ENCODE measurements at regions of chr2 and their contacts with region 1.

Region 1: GRCh38 chr2:30165050-30165520 is 18.3 kb downstream of the YPEL5 start:
- H3K4me3 ChIP-seq: no peak overlapping the region
- H3K27ac ChIP-seq: no peak overlapping the region
- H3K4me1 ChIP-seq: no peaks in the 10 kb centered on the region
- CTCF ChIP-seq: peak; percentile 90

Region 2: GRCh38 chr2:29802986-29803385 is 362.1 kb before region 1 on chr2:
- CTCF ChIA-PET with region 1: no interaction called
- POLR2A ChIA-PET with region 1: no interaction called
- H3K4me3 ChIP-seq: no peak overlapping the region
- H3K27ac ChIP-seq: no peak overlapping the region
- H3K4me1 ChIP-seq: no peaks in the 10 kb centered on the region
- CTCF ChIP-seq: no peak

Region 3: GRCh38 chr2:30146438-30147147 is 18.5 kb before region 1 on chr2 and contains the start of gene YPEL5:
- CTCF ChIA-PET with region 1: interaction called, 71 read pairs
- POLR2A ChIA-PET with region 1: interaction called, 10 read pairs
- H3K4me3 ChIP-seq: peak within 1 kb of the TSS; percentile 80
- H3K27ac ChIP-seq: peak within 1 kb of the TSS; percentile 92
- H3K4me1 ChIP-seq: peaks cover 22% of the 10 kb centered on the region
- CTCF ChIP-seq: no peak

Region 4: GRCh38 chr2:30185186-30185585 is 20.1 kb after region 1 on chr2:
- CTCF ChIA-PET with region 1: interaction called, 31 read pairs
- POLR2A ChIA-PET with region 1: no interaction called
- H3K4me3 ChIP-seq: no peak overlapping the region
- H3K27ac ChIP-seq: no peak overlapping the region
- H3K4me1 ChIP-seq: no peaks in the 10 kb centered on the region
- CTCF ChIP-seq: no peak

Region 5: DNA sequence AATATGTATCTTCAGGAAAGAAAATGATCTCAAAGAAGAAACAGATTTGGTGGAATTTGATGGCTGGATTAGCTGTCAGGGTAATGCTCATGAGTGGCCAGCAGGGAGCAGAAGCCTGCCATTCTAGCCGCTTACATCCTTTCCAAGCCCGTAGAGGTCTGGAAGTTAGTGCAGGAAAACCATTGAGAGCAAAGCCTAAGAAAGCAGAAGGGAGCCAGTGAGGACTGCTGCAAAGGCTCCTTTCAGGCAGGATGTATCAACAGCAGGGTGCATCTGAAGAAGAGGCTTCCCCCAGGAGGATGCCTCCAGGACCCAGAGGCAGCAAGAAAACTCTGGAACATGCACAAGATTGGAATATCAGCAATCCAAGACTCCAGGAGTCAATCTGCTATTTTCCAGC is 43.4 kb after region 1 on chr2:
- CTCF ChIA-PET with region 1: interaction called, 55 read pairs
- POLR2A ChIA-PET with region 1: no interaction called
- H3K4me3 ChIP-seq: no peak overlapping the region
- H3K27ac ChIP-seq: no peak overlapping the region
- H3K4me1 ChIP-seq: no peaks in the 10 kb centered on the region
- CTCF ChIP-seq: peak; percentile 55; the same call in 1 of the 2 replicates

Region 6: GRCh38 chr2:30475542-30475941 is 310.5 kb after region 1 on chr2:
- CTCF ChIA-PET with region 1: interaction called, 14 read pairs
- POLR2A ChIA-PET with region 1: no interaction called
- H3K4me3 ChIP-seq: no peak overlapping the region
- H3K27ac ChIP-seq: no peak overlapping the region
- H3K4me1 ChIP-seq: peaks cover 8% of the 10 kb centered on the region; the same call in 1 of the 2 replicates
- CTCF ChIP-seq: no peak

Measured in HEK293 (cell line).